Activated CD4-positive, alpha-beta memory T cell treated with anti-CD3 and anti-CD28 coated beads for 36 hours (primary cell): ENCODE measurements at regions of chr9 and their contacts with region 1.

Region 1: DNA sequence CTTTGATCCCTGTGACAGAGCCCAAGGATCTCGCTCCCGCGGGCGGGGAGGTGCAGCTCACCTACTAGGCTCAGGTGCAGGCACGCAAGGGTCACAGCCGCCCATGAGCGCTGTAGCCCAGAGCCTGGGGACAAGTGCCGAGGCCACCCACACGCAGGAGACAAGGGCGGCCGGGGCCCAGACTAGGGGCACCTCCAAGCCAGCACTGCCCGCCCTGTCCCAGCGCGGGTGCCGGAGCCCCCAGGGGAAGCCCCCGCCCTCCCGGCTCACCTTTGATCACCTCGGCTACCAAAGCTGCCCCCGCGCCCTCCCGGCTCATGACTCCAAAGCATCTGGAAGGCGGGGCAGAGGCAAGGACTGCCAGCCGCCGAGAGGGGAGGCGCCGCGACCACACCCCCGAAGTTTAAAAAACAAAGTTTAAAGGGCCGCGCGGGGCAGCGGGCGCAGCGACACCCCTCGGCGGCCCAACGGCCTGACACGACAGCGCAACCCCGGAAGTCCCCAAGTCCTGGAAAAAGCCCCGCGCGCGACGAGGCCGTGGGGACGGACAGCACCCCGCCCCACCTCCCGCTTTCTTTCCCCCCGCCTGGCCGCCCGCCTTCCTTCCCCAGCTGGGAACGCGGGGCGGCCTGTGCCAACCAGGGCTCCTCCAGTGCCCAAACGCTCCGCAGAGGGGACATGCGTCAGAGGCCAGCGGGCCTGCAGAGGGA is 53.0 kb downstream of the CDC14B start:
- DNase-seq: peak; percentile 84
- H3K4me3 Mint-ChIP-seq: peak overlapping the region; percentile 77
- H3K27ac Mint-ChIP-seq: peak overlapping the region; percentile 83
- H3K4me1 Mint-ChIP-seq: peaks cover 30% of the 10 kb centered on the region
- H3K27me3 Mint-ChIP-seq: peaks cover 6% of the 10 kb centered on the region

Region 2: GRCh38 chr9:96418074-96418809 is 148.4 kb before region 1 on chr9 and contains the start of gene ZNF367:
- CTCF ChIA-PET with region 1: no interaction called
- POLR2A ChIA-PET with region 1: no interaction called
- intact Hi-C with region 1: loop called (anchors 10 kb)
- DNase-seq: peak; percentile 96
- H3K4me3 Mint-ChIP-seq: peak within 1 kb of the TSS; percentile 90
- H3K27ac Mint-ChIP-seq: peak within 1 kb of the TSS; percentile 93
- H3K4me1 Mint-ChIP-seq: peaks cover 37% of the 10 kb centered on the region
- H3K27me3 Mint-ChIP-seq: no peaks in the 10 kb centered on the region
- total RNA-seq, gene ZNF367: 29.0 to 30.1 TPM

Region 3: GRCh38 chr9:96449845-96450612 is 116.6 kb before region 1 on chr9 and contains the start of gene HABP4:
- CTCF ChIA-PET with region 1: interaction called, 19 read pairs
- POLR2A ChIA-PET with region 1: interaction called, 9 read pairs
- intact Hi-C with region 1: loop called (anchors 1 kb)
- DNase-seq: peak; percentile 97
- H3K4me3 Mint-ChIP-seq: peak within 1 kb of the TSS; percentile 89
- H3K27ac Mint-ChIP-seq: peak within 1 kb of the TSS; percentile 75
- H3K4me1 Mint-ChIP-seq: peaks cover 33% of the 10 kb centered on the region
- H3K27me3 Mint-ChIP-seq: peaks cover 8% of the 10 kb centered on the region
- total RNA-seq, gene HABP4: 17.4 to 19.0 TPM

Region 4: DNA sequence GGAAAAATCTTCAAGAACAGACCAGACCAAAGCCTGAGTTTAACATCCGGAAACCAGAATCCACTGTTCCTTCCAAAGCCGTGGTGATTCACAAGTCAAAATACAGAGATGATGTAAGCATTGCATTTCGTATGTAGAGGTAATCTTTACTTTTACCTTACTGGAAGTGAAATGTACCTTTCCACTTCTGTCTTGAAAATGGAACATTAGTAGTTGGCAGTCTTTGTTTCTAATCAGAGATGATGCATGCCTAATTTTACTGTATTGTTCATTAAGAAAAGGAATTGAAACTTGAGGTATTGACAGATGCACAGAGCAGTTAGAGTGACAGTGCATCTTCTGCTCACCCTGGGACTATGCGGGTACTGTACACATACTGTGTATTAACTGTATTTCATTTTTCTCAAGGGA is 82.1 kb before region 1 on chr9:
- CTCF ChIA-PET with region 1: interaction called, 3 read pairs
- POLR2A ChIA-PET with region 1: no interaction called
- intact Hi-C with region 1: loop called (anchors 1 kb)
- DNase-seq: peak; percentile 35
- H3K4me3 Mint-ChIP-seq: no peak overlapping the region
- H3K27ac Mint-ChIP-seq: peak overlapping the region; percentile 73
- H3K4me1 Mint-ChIP-seq: peaks cover 41% of the 10 kb centered on the region
- H3K27me3 Mint-ChIP-seq: no peaks in the 10 kb centered on the region

Region 5: DNA sequence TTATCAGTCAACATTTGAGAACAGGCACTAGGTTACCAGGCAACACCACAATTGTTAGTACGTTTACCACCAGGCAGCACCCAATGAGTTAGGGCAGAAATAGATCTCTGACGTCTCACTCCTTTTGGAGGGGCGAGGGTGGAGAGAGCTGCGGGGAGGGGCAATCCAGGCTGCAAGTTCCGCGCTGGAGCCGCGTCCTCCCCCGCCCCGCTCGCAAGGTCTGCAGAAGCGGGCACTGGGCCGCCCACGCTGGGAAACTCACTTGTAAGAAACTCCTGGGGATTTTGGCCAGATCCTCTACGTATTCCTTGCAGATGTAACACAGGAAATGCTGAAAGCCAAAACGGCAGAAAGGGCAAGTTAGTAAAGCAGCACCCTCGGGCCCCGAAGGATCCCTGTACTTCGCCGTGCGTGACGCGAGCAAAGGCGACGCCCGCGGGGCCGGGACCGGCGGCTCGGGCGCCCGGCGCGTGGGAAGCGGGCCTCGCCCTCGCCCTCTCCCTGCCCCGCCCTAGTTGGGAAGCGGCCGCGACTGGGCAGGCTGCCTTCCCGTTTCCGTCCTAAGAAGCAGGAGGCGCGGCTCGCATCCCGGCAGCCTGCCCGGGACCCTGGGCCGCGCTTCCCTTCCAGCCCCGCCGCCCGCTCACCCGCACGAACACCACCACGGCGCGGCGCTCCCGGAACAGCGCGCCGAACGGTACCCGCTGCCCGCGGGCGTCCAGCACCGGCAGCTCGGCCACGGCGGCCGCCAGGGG is 88.0 kb after region 1 on chr9:
- CTCF ChIA-PET with region 1: no interaction called
- POLR2A ChIA-PET with region 1: no interaction called
- intact Hi-C with region 1: loop called (anchors 5 kb)
- DNase-seq: peak; percentile 77
- H3K4me3 Mint-ChIP-seq: peak overlapping the region; percentile 85
- H3K27ac Mint-ChIP-seq: peak overlapping the region; percentile 70
- H3K4me1 Mint-ChIP-seq: peaks cover 13% of the 10 kb centered on the region
- H3K27me3 Mint-ChIP-seq: no peaks in the 10 kb centered on the region